OCI-LY7 (cell line): ENCODE measurements at regions of chr1 and their contacts with region 1.

Region 1: DNA sequence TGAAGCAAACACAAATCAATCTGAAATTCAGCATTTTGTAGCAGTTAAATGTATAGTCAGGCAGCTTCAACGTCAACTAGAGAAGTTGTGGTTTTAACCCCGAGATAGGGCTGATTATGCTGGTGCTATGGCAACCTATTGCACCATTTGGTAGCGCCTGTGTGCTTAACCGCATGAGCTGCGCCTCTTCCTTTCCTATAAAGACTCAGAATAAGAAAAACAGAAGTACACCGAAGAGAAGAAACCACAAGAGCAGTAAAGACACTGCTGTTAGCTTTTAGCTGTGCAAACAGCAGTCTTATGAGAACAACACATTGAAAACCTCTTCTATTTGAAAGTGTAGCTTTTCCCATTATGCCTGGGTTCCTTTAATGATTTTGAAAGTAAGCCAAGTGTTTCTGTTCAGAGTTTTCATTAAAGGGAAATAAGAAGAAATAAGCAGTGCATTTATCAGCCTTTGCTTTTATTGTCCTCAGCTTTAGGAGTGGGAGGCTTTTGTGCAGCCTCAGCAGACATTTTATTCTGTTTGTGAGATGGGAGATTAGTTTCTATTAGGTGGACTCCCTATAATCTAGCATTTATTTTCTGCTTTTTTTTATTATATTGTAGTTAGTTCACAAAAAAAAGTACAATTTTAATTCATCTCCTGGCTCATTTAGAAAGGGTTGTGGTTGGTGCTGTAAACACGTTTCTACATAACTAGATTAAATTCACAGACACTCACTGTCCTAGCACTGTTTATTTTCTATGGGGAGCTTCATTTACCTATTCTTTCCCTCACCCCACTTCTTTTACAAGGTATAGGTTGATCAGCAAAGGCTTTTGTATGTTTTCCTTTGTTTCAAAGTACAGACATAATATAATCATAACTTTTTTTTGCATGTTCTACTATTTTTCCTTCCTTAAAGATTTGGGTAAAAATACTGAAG is 43.3 kb downstream of the PTPRC start:
- DNase-seq: peak; percentile 98
- H3K4me3 ChIP-seq: peak overlapping the region; percentile 59
- H3K27ac ChIP-seq: peak overlapping the region; percentile 99
- H3K4me1 ChIP-seq: peaks cover 98% of the 10 kb centered on the region
- CTCF ChIP-seq: no peak

Region 2: GRCh38 chr1:198056255-198056654 is 625.8 kb before region 1 on chr1:
- CTCF ChIA-PET with region 1: no interaction called
- POLR2A ChIA-PET with region 1: no interaction called
- intact Hi-C with region 1: no loop called
- DNase-seq: peak; percentile 14
- H3K4me3 ChIP-seq: no peak overlapping the region
- H3K27ac ChIP-seq: no peak overlapping the region
- H3K4me1 ChIP-seq: no peaks in the 10 kb centered on the region
- CTCF ChIP-seq: peak; percentile 61

Region 3: DNA sequence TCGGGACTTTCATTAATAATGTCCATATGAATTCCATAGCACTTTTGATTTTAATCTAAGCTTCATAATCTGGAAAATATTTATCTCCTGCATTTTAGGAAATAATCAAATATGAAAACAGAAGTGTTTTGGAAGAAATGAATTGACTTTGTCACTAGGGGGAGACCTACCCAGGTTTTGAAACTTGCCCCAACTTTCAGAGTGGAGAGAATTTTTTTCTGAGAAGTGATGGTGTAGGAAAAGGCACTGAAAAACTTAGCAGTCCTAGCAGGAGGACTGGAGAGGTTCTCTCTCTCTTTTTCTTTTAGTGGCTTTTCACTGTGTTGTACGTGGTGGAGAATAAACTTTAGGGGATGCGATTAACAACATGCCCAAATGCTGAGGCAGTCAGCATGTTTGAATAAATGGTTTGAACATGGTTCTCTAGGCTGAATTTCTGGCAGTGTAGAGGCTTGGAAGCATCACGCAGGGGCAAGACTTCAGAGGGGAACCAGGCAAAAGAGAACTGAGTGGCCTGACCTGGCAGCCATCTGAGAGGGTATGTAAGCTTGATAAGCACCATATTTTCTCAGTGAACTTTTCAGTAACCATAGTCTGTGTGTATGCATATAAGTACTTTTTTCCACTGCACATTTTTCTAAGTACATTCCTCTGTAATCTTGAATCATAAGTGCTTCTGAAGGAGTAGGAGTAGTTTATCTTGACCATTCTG is 593.6 kb before region 1 on chr1:
- CTCF ChIA-PET with region 1: no interaction called
- POLR2A ChIA-PET with region 1: no interaction called
- intact Hi-C with region 1: loop called (anchors 2 kb)
- DNase-seq: peak; percentile 47
- H3K4me3 ChIP-seq: no peak overlapping the region
- H3K27ac ChIP-seq: no peak overlapping the region
- H3K4me1 ChIP-seq: no peaks in the 10 kb centered on the region
- CTCF ChIP-seq: peak; percentile 89

Region 4: DNA sequence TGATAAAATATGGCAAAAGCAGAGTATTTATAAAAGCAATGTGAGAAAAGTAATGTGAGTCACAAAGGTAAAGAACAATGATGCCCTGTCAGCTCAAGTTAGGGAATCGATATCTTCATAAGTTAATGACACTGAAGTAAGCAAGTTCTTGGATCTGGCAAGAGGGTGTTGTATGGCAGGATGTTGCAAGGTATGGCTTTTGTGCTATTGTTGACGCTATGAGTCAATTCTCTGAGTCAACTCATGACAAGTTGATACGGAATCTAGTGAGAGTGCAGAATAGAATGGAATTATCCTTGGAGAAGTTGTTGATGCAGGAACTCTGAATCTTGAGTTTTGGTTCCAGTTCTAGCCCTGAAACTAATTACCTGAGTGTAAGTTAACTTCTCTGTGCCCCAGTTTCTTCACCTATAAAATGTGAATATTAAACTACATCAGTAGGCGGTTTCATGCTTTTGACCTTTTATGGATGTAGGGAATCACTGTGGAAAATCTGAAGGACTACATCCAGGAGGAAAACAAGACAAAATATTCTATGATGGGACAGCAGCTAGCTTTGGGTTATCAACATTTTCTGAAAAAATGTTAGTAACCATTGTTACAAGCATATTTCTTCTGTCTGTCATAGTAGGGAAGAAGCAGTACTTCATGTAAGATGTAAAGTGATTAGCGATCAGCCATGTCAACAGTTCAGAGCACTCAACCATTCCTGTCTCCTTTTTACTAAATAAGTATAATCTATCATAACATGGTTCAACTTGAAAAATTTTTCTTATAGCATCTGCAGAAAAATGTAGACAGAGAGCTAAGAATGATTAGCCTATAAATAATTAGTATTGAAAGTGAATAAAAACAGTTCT is 238.5 kb before region 1 on chr1:
- CTCF ChIA-PET with region 1: no interaction called
- POLR2A ChIA-PET with region 1: no interaction called
- intact Hi-C with region 1: no loop called
- DNase-seq: no peak
- H3K4me3 ChIP-seq: no peak overlapping the region
- H3K27ac ChIP-seq: no peak overlapping the region
- H3K4me1 ChIP-seq: no peaks in the 10 kb centered on the region
- CTCF ChIP-seq: no peak

Region 5: GRCh38 chr1:198520524-198521254 is 161.4 kb before region 1 on chr1:
- CTCF ChIA-PET with region 1: no interaction called
- POLR2A ChIA-PET with region 1: interaction called, 3 read pairs
- intact Hi-C with region 1: loop called (anchors 5 kb)
- DNase-seq: no peak
- H3K4me3 ChIP-seq: no peak overlapping the region
- H3K27ac ChIP-seq: no peak overlapping the region
- H3K4me1 ChIP-seq: peaks cover 32% of the 10 kb centered on the region
- CTCF ChIP-seq: no peak

Region 6: DNA sequence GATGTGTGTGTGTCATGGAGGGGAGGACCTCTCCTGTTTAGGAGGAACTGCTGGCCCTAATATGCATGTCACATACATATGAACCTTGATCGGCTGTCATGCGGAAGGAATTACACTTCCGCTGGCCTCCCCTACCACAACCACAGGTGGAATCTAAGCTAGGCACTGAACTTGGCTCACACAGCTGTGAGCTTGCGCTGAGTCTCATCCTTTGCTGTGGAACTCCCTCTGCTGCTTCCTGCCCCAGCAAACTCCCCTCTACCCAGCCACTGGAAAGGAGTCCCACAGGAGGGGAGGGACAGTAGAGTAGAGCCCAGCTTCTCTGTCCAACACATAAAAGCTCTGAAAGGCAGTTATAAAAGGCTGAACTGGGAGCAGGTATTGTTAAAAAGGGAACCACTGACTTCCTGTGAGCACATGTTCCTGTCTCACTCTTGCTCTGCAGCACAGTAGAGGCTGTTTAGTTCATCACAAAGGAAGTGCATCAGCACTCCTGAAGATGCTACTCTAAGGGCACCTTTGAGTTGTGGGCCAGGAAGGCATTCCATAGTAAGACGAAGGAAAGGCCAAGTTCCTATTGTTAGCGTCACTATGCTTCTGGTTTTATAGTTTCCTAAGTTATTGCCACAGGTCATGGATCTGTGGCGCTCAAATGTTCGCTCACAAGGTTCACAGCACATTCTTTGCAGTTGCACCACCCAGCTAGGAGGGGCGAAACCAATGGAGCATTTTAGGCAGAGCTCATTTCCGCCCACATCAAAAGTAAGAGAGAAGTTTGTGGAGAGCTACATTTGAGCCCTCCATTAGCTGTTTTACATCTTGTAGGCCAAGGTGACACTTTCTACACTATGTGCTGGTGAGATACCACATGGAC is 60.9 kb before region 1 on chr1:
- CTCF ChIA-PET with region 1: interaction called, 22 read pairs
- POLR2A ChIA-PET with region 1: interaction called, 410 read pairs
- intact Hi-C with region 1: loop called (anchors 1 kb)
- DNase-seq: peak; percentile 97
- H3K4me3 ChIP-seq: peak overlapping the region; percentile 65
- H3K27ac ChIP-seq: peak overlapping the region; percentile 98
- H3K4me1 ChIP-seq: peaks cover 81% of the 10 kb centered on the region
- CTCF ChIP-seq: no peak; the same call in 1 of the 2 replicates

Region 7: GRCh38 chr1:198657550-198658064 is 24.5 kb before region 1 on chr1:
- CTCF ChIA-PET with region 1: interaction called, 5 read pairs
- POLR2A ChIA-PET with region 1: interaction called, 40 read pairs
- intact Hi-C with region 1: loop called (anchors 2 kb)
- DNase-seq: peak; percentile 73
- H3K4me3 ChIP-seq: peak overlapping the region; percentile 58
- H3K27ac ChIP-seq: peak overlapping the region; percentile 86
- H3K4me1 ChIP-seq: peaks cover 84% of the 10 kb centered on the region
- CTCF ChIP-seq: no peak

Region 8: DNA sequence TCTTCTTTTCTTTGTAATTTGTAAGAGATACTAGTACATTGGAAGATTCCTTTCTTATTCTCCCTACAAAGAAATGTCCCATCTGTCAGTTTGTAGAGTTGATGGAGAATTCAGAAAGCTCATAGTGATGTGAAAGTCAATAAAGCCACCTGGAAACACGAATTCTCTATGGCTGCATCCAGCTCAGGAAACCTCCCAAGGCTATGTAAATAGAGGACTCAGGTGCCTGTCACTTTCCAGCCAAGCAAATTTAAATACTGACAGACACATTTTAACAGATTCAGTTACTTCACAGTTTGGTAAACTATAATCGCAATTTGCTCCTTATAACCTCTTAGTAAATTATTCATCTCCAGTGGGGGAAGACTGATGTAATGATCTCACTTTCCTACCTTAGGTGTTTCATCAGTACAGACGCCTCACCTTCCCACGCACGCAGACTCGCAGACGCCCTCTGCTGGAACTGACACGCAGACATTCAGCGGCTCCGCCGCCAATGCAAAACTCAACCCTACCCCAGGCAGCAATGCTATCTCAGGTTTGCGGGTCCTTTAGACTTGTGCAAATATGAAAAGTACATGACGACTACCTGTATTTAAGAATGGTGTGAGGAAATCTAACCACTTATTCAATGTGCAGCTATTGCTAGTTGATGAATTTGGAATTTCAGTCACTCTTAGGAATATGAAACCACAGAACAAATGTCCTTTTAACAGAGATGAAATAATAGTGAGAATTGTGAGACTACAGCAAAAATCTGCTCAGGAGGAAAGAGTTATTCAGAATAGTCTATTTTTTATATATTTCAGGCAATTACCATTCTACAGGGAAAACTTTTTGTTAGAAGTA is 17.3 kb after region 1 on chr1:
- CTCF ChIA-PET with region 1: interaction called, 5 read pairs
- POLR2A ChIA-PET with region 1: interaction called, 19 read pairs
- intact Hi-C with region 1: no loop called
- DNase-seq: no peak
- H3K4me3 ChIP-seq: no peak overlapping the region
- H3K27ac ChIP-seq: no peak overlapping the region
- H3K4me1 ChIP-seq: peaks cover 52% of the 10 kb centered on the region
- CTCF ChIP-seq: peak; percentile 76